ENCODE measurements at regions of chr7 and their contacts with region 1.

Region 1: GRCh38 chr7:26365077-26365900 is 73.6 kb downstream of the SNX10 start:
- DNase-seq: peak in 1 of 3 donors; percentile 58
- ATAC-seq: peak; percentile 65 to 87 (median 72)
- H3K4me3 ChIP-seq: no peak overlapping the region
- H3K27ac ChIP-seq: peak overlapping the region in 2 of 3 donors; percentile 1 to 34
- H3K4me1 ChIP-seq: peaks cover 0 to 28% (median 7%) of the 10 kb centered on the region in 4 donors
- H3K27me3 ChIP-seq: no peaks in the 10 kb centered on the region
- CTCF ChIP-seq: peak; percentile 72 to 89 (median 74)
- POLR2A ChIP-seq: peak; percentile 8

Region 2: DNA sequence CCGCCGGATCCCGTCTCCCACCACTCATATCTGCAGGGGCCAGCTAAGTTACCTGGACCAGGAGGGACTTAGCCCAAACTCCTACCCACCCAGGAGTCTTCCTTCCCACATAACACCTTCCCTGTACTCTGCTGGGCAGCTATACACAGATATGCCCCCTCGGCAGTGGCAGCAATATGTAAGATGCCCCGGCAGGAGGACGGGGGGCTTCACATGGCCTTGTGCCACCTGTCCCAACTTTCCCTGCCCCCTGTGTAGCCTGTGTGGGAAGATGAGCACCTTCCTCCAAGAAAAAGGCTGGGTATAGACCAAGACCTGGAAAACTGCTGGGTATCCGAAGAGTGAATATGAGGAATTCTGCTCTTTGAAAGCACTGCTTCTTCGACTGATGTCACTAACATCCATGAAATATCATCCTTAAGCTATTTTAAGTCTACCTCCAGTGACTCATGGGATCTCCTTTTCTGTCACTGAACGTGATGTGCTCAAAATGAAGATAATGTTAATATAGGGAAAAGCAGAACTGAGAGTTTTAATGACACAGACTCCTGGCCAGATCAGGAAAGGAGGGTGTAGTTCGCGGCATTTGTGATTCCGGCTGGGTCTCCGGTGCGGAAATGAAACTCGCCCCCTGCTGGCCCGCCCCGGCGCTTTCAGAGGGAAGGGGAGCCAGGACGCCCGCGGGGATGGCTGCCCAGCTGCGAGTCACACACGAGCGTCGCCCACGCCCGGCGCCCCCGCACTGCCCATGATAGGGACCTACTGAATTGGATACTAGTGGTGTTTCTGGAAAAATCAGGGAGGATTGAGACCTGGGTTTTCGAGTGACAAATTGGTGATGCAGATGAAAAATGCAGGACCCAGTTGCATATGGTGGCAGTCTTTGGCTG is 470.1 kb before region 1 on chr7:
- intact Hi-C with region 1: loop called in 1 of 2 experiments (anchors 10 kb)
- DNase-seq: peak; percentile 75
- ATAC-seq: peak; percentile 81 to 85 (median 84)
- H3K4me3 ChIP-seq: peak overlapping the region in 2 of 3 donors; percentile 25 to 36
- H3K27ac ChIP-seq: no peak overlapping the region
- H3K4me1 ChIP-seq: no peaks in the 10 kb centered on the region
- H3K27me3 ChIP-seq: no peaks in the 10 kb centered on the region
- CTCF ChIP-seq: peak; percentile 56 to 79 (median 78)
- POLR2A ChIP-seq: no peak

Region 3: GRCh38 chr7:26090927-26091519 is 274.3 kb before region 1 on chr7:
- intact Hi-C with region 1: loop called in 1 of 2 experiments (anchors 10 kb)
- DNase-seq: no peak
- ATAC-seq: peak; percentile 78 to 83 (median 81)
- H3K4me3 ChIP-seq: no peak overlapping the region
- H3K27ac ChIP-seq: no peak overlapping the region
- H3K4me1 ChIP-seq: peaks cover 0 to 4% (median 0%) of the 10 kb centered on the region in 4 donors
- H3K27me3 ChIP-seq: no peaks in the 10 kb centered on the region
- CTCF ChIP-seq: peak; percentile 66 to 75 (median 74)
- POLR2A ChIP-seq: no peak

Region 4: GRCh38 chr7:26250239-26250638 is 115.0 kb before region 1 on chr7:
- intact Hi-C with region 1: no loop called
- DNase-seq: no peak
- ATAC-seq: no peak
- H3K4me3 ChIP-seq: no peak overlapping the region
- H3K27ac ChIP-seq: no peak overlapping the region
- H3K4me1 ChIP-seq: no peaks in the 10 kb centered on the region
- H3K27me3 ChIP-seq: no peaks in the 10 kb centered on the region
- CTCF ChIP-seq: no peak
- POLR2A ChIP-seq: no peak

Region 5: DNA sequence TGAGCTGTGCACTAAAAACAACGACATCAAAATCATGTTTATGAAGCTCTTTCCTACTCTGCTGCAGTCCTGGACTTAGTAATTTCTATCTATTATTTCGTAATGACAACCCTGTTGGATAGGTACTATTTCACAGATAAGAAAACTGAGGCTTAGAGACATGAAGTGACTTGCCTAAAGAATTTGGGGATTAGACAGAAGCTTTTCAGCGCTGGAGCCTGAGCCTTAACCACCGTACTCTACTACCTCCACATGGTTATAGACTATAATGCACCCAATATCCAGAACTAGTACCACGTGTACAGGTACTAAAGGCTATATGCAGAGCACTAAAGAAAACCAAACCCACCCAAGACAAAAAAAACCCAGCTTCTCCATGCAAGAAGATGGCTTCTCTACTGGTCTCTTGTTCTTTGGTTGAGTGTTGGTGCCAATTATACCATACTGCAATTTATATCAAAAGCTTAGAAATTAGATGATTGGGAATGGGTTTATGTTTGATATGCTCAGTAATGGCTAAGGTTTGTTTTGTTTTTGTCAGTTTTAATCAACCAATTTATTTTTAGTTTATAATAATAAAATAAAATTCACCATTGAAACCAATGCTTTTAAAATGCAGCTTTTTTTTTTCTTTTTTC is 80.2 kb before region 1 on chr7:
- intact Hi-C with region 1: loop called in 1 of 2 experiments (anchors 10 kb)
- DNase-seq: no peak
- ATAC-seq: peak in 1 of 4 donors; percentile 25
- H3K4me3 ChIP-seq: no peak overlapping the region
- H3K27ac ChIP-seq: no peak overlapping the region
- H3K4me1 ChIP-seq: no peaks in the 10 kb centered on the region
- H3K27me3 ChIP-seq: no peaks in the 10 kb centered on the region
- CTCF ChIP-seq: no peak
- POLR2A ChIP-seq: no peak

Measured in right lobe of liver (tissue), 6 donors.